IMR-90 (cell line): ENCODE measurements at regions of chr5 and their contacts with region 1.

Region 1: GRCh38 chr5:176675675-176676360 is 28.5 kb downstream of the TSPAN17 start:
- DNase-seq: no peak
- ATAC-seq: peak; percentile 51; the same call in 1 of the 2 replicates
- H3K4me3 ChIP-seq: no peak overlapping the region
- H3K27ac ChIP-seq: no peak overlapping the region
- H3K4me1 ChIP-seq: no peaks in the 10 kb centered on the region
- H3K27me3 ChIP-seq: peaks cover 47% of the 10 kb centered on the region
- CTCF ChIP-seq: peak; percentile 39
- POLR2A ChIP-seq: no peak
- RAD21 ChIP-seq: no peak

Region 2: DNA sequence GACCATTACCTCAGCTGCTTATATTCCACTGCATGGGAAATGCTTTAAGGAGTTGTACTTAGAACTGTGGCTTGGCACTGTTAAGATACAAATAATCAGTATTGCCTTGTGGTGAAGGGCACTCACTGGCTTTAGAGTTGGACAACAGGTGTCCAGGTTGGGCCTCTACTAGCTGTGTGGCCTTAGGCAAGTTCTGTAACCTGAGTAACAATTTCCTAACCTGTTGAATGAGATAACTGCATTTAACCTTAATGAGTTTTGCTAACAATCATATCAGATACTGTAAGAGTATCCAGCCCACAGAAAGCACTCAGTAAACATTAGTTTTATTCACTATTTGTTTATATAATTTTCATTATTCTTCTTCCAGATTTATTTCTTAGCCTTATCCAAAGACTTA is 240.5 kb after region 1 on chr5:
- CTCF ChIA-PET with region 1: no interaction called
- POLR2A ChIA-PET with region 1: interaction called, 17 read pairs
- dilution Hi-C with region 1: no loop called
- in situ Hi-C with region 1: no loop called
- intact Hi-C with region 1: no loop called
- DNase-seq: no peak
- ATAC-seq: no peak
- H3K4me3 ChIP-seq: no peak overlapping the region
- H3K27ac ChIP-seq: no peak overlapping the region
- H3K4me1 ChIP-seq: no peaks in the 10 kb centered on the region
- H3K27me3 ChIP-seq: no peaks in the 10 kb centered on the region
- CTCF ChIP-seq: no peak
- POLR2A ChIP-seq: no peak
- RAD21 ChIP-seq: no peak